ENCODE measurements at regions of chr20 and their contacts with region 1.

Region 1: GRCh38 chr20:38434743-38435554 is at the start of gene SNHG17:
- DNase-seq: peak; percentile 97
- H3K4me3 Mint-ChIP-seq: peak within 1 kb of the TSS; percentile 96
- H3K27ac Mint-ChIP-seq: peak within 1 kb of the TSS; percentile 96
- H3K4me1 Mint-ChIP-seq: peaks cover 32% of the 10 kb centered on the region
- H3K27me3 Mint-ChIP-seq: peaks cover 2% of the 10 kb centered on the region
- total RNA-seq, gene SNHG17: 99.8 and 111 TPM in 2 replicates

Region 2: DNA sequence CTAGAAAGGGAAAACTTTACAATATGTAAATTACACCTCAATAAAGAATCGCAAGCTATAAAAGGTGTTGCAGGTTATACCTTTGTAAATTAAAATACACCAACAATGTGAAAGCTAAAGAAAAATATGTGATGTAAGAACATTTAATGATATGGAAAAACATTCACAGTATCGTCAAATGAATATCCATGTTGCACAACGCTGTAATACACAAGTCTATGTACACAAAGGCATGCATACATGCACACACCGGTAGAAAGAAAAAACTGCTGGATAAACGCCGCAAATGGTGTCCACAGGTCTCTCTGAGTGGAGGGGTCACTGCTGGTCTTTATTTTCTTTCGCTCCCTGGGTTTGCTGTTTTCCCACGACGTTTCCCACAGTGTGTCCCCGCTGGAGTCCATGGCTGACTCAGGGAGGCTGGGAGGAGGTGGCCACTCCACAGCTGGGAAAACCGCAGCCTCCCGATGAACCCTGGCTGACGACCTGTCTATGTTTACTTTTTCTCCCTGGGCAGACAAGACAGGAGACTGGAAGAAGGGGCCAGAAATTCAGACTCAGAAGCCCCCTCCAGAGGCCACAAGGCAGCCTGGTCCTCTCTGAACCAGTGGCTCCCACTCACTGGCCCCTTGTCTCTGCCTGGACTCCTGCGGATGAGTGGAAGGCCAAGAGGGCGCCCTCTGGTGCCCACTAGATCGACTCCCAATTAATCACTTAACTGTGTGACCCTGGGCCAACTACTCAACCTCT is 143.9 kb before region 1 on chr20:
- intact Hi-C with region 1: no loop called
- DNase-seq: no peak
- H3K4me3 Mint-ChIP-seq: no peak overlapping the region
- H3K27ac Mint-ChIP-seq: no peak overlapping the region
- H3K4me1 Mint-ChIP-seq: no peaks in the 10 kb centered on the region
- H3K27me3 Mint-ChIP-seq: peaks cover 19% of the 10 kb centered on the region

Region 3: DNA sequence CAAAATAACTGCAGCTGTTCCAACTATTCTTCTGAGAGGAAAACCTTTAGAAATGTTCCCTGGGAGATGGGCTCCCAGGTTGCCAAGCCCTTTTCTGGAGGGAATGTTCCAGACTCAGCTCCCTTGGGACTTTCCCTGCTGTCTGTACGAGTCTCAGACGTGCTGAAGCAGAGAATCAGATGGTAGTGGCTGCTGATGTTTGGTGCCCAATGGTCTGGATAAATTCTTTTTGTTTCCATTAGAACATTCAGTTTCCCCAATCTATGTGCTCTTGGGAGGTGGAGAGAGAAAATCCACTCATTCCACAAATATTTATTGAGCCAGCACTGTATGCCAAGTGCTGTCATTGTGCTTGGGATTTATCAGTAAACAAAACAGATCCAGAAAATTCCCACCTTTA is 39.8 kb before region 1 on chr20:
- intact Hi-C with region 1: no loop called
- DNase-seq: no peak
- H3K4me3 Mint-ChIP-seq: no peak overlapping the region
- H3K27ac Mint-ChIP-seq: no peak overlapping the region
- H3K4me1 Mint-ChIP-seq: no peaks in the 10 kb centered on the region
- H3K27me3 Mint-ChIP-seq: peaks cover 7% of the 10 kb centered on the region

Region 4: DNA sequence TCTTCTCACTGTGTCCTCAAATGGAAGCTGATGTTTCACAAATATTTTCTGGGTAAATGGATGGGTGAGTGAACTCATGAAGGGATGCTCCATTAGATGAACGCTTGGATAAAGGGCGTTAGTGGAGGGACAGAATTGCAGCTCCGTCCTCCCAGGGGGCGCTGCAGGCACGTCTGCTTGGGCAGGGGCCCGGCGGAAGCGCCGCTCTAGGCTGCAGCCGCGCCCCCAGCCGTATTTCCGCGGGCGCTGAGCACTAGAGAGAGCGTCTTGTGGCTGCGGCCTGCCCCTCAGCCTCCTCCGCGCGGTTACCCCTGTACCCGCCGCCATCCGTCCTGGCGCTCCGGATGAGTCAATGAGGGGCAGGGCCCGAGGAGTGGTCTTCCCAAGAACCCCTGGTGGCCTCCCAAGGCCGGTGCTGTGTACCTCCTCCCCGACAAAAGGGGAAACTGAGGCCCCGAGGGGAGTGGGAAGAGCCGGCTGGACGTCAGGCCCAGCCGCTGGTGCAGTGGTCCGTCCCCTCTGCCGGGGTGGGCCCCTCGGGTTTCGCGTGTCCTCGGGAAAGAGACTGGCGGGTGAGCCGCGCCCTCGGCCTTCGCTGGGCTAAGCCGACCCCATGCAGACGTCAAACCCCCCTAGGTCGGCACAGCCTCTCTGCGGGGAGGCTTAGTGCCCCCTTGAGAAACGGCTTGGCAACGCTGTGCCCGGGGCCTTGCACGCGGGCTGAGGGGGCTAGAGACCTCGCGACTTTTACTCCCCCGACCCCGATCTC is 11.7 kb after region 1 on chr20:
- intact Hi-C with region 1: loop called (anchors 1 kb)
- DNase-seq: peak; percentile 98
- H3K4me3 Mint-ChIP-seq: peak overlapping the region; percentile 85
- H3K27ac Mint-ChIP-seq: peak overlapping the region; percentile 93
- H3K4me1 Mint-ChIP-seq: peaks cover 30% of the 10 kb centered on the region
- H3K27me3 Mint-ChIP-seq: peaks cover 7% of the 10 kb centered on the region

Region 5: DNA sequence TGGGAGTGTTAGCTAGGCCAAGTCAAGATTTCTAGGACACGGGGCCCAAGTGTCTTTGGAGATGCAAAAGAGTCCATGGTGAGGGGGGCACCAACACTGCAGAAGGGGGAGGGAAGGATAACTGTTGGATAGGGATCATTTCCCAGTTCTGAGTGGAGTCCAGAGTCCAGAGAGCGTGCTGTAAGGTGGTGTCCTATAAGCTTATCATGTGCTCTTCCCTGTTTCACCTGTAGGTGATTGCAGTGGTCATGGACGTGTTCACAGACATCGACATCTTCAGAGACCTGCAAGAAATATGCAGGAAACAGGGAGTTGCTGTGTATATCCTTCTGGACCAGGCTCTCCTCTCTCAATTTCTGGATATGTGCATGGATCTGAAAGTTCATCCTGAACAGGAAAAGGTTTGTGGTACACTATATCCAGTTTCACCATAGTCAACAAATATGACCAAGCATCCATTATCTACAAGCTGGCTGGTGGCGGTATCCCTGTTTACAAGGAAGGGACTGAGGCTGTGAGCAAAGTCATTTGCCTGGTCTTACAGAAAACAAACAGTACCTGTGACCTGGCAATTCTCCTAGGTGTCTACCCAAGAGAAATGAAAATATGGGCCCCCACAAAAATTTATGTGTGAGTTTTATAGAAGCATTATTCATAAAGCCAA is 506.9 kb after region 1 on chr20:
- intact Hi-C with region 1: no loop called
- DNase-seq: no peak
- H3K4me3 Mint-ChIP-seq: no peak overlapping the region
- H3K27ac Mint-ChIP-seq: peak overlapping the region; percentile 10
- H3K4me1 Mint-ChIP-seq: peaks cover 14% of the 10 kb centered on the region
- H3K27me3 Mint-ChIP-seq: no peaks in the 10 kb centered on the region

Measured in activated CD4-positive, alpha-beta T cell treated with anti-CD3 and anti-CD28 coated beads, Interleukin-2, amount 10 ng/mL, durations not matched to agents 24 days and 14 days (primary cell).